Transverse colon (tissue), 4 donors: ENCODE measurements at regions of chr16 and their contacts with region 1.

Region 1: DNA sequence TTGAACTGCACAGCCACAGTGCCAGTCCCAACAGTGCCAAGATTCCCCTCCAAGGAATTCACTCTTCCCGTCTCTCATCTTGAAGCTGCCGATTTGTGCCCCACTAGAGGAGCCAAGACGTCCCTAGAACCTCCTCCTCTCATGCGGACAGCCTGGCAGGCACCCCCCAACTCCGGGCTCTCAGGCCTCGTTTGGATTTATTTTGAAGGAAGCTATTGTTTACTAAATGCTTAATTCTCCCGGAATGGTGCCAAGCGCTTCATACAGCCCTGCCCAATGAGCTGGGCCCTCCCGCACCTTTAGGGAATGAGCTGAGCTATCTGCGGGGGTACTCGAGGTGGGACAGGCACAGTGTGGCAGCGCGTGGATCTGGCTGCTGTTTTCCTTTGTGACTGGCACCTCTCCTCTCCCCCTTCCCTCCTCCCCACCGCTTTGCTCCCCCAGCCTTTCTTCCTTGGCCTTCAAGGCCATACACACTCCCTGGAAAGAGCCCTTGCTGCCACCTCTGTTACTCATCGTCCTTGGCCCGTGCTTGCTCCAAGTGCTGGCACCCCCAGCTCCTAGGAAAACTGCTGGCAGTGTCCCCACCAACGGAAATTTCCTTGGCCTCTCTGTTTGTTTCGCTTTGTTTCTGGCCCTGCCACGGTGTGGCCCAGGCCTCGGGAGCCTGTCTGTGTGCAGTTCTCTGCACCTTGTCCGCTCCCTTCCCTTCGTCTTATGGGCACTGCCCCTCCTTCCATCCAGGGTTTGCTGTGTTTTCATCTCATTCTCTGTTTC is 49.9 kb upstream of the CDR2 start:
- DNase-seq: peak; percentile 18
- H3K4me3 ChIP-seq: no peak overlapping the region
- H3K27ac ChIP-seq: peak overlapping the region; percentile 64 to 74 (median 66)
- H3K4me1 ChIP-seq: peaks cover 0 to 12% (median 0%) of the 10 kb centered on the region in 4 donors
- H3K27me3 ChIP-seq: no peaks in the 10 kb centered on the region
- CTCF ChIP-seq: no peak
- EP300 ChIP-seq: no peak
- POLR2A ChIP-seq: no peak

Region 2: GRCh38 chr16:21145738-21146137 is 1278.6 kb before region 1 on chr16:
- in situ Hi-C with region 1: loop called in 1 of 4 experiments (anchors 25 kb)
- intact Hi-C with region 1: no loop called
- DNase-seq: no peak
- H3K4me3 ChIP-seq: no peak overlapping the region
- H3K27ac ChIP-seq: no peak overlapping the region
- H3K4me1 ChIP-seq: peaks cover 0 to 6% (median 5%) of the 10 kb centered on the region in 4 donors
- H3K27me3 ChIP-seq: no peaks in the 10 kb centered on the region
- CTCF ChIP-seq: no peak
- EP300 ChIP-seq: no peak
- POLR2A ChIP-seq: no peak

Region 3: GRCh38 chr16:22321339-22322001 is 102.9 kb before region 1 on chr16:
- in situ Hi-C with region 1: loop called in 2 of 4 experiments (anchors 10 to 25 kb)
- intact Hi-C with region 1: no loop called
- DNase-seq: peak; percentile 76
- H3K4me3 ChIP-seq: no peak overlapping the region
- H3K27ac ChIP-seq: no peak overlapping the region
- H3K4me1 ChIP-seq: peaks cover 0 to 3% (median 0%) of the 10 kb centered on the region in 4 donors
- H3K27me3 ChIP-seq: no peaks in the 10 kb centered on the region
- CTCF ChIP-seq: peak; percentile 90 to 95 (median 92)
- EP300 ChIP-seq: no peak
- POLR2A ChIP-seq: no peak

Region 4: DNA sequence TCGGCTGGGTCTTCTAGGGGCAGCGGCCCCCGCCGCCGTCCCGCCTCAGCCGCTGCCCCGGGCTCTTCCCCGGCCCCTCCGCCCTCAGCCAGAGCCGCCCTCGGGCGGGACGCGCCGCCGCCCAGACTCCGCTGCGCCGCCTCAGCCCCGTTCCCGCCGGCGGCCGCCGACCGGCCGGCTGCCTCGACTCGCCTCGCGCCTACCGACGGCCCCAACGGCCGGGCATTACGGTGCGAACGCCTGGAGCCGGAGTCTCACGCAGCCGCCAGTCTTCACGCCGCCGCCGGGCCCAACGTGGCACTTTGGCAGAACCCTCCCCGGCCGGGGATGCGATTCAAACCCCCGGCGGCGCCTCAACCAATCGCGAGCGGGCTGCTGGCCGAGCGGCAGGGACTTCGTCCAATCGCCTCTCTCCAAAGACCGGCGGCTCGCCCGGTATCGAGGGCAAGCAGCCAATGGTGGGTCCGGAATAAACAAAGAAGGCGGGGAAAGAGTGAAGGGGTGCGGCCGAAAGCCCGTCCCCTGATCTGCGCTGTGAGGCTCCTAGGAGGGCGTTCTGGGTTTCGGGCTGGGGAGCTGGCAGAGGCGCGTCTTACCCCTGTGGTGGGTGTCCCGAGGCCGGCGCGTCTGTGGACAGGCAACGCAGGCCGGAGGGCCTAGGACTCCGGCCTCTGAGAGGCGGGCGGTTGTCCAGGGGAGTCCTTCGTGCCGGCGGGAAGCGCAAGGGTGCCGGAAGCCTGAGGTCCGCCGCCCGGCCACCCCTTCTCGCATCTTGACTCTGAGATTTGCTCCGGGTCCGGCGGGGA is 49.8 kb before region 1 on chr16 and contains the start of gene CDR2:
- in situ Hi-C with region 1: no loop called
- intact Hi-C with region 1: no loop called
- DNase-seq: peak; percentile 99
- H3K4me3 ChIP-seq: peak within 1 kb of the TSS; percentile 80 to 92 (median 86)
- H3K27ac ChIP-seq: peak within 1 kb of the TSS; percentile 92 to 96 (median 94)
- H3K4me1 ChIP-seq: peaks cover 18 to 46% (median 40%) of the 10 kb centered on the region in 4 donors
- H3K27me3 ChIP-seq: no peaks in the 10 kb centered on the region
- CTCF ChIP-seq: no peak
- EP300 ChIP-seq: no peak
- POLR2A ChIP-seq: peak; percentile 86
- total RNA-seq, gene CDR2: 21.7 to 317 (median 24.1) TPM

Region 5: GRCh38 chr16:22641131-22641628 is 216.8 kb after region 1 on chr16:
- in situ Hi-C with region 1: loop called in 1 of 4 experiments (anchors 25 kb)
- intact Hi-C with region 1: no loop called
- DNase-seq: no peak
- H3K4me3 ChIP-seq: no peak overlapping the region
- H3K27ac ChIP-seq: no peak overlapping the region
- H3K4me1 ChIP-seq: no peaks in the 10 kb centered on the region
- H3K27me3 ChIP-seq: peaks cover 17% of the 10 kb centered on the region
- CTCF ChIP-seq: no peak
- EP300 ChIP-seq: no peak
- POLR2A ChIP-seq: no peak